ENCODE measurements at regions of chr14 and their contacts with region 1.

Region 1: DNA sequence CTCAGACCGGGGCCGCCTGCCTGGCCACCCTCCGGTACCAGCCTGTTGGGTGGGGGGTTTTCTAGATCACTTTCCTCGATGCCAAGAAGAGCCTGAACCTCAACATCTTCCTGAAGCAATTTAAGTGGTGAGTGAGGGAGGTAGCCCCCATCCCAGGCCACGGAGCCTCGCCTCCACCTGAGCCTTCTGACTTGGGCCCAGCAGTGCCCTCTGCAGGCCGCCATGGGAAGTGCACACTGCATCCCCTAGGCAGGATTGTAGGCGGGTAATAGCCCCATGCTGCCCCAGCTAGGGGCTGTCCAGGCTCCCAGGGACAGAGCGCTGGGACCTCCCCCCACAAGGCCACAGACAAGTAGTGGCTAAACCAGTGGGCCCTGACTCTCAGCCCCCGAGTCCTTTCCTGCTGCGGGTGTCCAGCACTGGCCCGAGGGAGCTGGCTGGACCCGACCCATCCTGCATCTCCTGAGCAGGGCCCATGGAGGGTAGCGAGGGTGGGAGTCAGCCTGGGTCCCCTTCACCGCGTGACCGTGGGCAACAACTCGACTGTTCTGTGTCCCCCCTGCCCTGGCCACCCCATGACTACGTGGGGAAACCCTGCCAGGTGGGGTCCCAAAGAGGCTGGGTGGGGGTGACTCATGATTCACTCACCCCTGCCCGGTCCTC is 15.3 kb upstream of the ADSS1 start:
- DNase-seq: peak; percentile 72
- H3K4me3 Mint-ChIP-seq: no peak overlapping the region
- H3K27ac Mint-ChIP-seq: no peak overlapping the region
- H3K4me1 Mint-ChIP-seq: peaks cover 6% of the 10 kb centered on the region
- H3K27me3 Mint-ChIP-seq: no peaks in the 10 kb centered on the region
- CTCF ChIP-seq: peak; percentile 94

Region 2: GRCh38 chr14:104650057-104650981 is 58.4 kb before region 1 on chr14:
- CTCF ChIA-PET with region 1: interaction called, 12 read pairs
- POLR2A ChIA-PET with region 1: no interaction called
- intact Hi-C with region 1: loop called (anchors 1 kb)
- DNase-seq: peak; percentile 56
- H3K4me3 Mint-ChIP-seq: no peak overlapping the region
- H3K27ac Mint-ChIP-seq: no peak overlapping the region
- H3K4me1 Mint-ChIP-seq: no peaks in the 10 kb centered on the region
- H3K27me3 Mint-ChIP-seq: peaks cover 11% of the 10 kb centered on the region
- CTCF ChIP-seq: peak; percentile 97